CD4-positive, alpha-beta T cell (primary cell): ENCODE measurements at regions of chr11 and their contacts with region 1.

Region 1: DNA sequence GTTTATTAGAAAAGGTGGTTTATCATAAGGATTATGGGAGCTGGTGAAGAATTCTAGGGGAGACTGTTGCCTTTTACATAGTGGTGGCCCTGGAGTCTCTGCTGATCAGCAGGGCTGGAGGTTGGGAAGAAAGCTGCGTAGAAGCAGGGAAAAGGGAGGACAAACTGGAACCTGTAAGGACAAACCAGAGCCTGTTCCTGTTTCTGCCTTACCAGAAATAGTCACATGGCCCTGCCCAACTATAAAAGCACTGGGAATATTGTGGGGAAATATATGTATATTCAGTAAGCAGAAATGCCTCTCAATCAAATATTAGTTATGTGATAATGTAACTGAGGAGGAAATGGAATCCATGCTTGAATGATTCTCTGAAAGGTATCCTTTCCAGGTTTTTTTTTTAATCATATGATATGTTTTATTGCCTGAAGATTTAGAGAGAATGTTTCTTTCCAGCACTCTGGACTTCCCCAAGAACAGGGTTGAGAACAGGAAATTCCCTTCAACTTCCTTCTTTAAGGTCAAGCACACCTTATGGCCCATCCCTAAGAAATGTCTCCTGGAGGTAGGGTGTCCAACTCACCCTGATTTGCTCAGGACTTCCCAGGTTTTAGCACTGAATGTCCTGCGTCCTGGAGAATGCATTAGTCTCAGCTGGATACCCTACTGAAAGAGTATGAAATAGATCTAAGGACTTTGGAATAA is 33.9 kb upstream of the SCUBE2 start:
- DNase-seq: no peak
- ATAC-seq: no peak
- H3K4me3 ChIP-seq: no peak overlapping the region
- H3K4me3 Mint-ChIP-seq: no peak overlapping the region
- H3K27ac ChIP-seq: no peak overlapping the region
- H3K27ac Mint-ChIP-seq: no peak overlapping the region
- H3K4me1 ChIP-seq: no peaks in the 10 kb centered on the region
- H3K4me1 Mint-ChIP-seq: no peaks in the 10 kb centered on the region
- H3K27me3 ChIP-seq: no peaks in the 10 kb centered on the region
- H3K27me3 Mint-ChIP-seq: no peaks in the 10 kb centered on the region
- CTCF ChIP-seq: no peak

Region 2: DNA sequence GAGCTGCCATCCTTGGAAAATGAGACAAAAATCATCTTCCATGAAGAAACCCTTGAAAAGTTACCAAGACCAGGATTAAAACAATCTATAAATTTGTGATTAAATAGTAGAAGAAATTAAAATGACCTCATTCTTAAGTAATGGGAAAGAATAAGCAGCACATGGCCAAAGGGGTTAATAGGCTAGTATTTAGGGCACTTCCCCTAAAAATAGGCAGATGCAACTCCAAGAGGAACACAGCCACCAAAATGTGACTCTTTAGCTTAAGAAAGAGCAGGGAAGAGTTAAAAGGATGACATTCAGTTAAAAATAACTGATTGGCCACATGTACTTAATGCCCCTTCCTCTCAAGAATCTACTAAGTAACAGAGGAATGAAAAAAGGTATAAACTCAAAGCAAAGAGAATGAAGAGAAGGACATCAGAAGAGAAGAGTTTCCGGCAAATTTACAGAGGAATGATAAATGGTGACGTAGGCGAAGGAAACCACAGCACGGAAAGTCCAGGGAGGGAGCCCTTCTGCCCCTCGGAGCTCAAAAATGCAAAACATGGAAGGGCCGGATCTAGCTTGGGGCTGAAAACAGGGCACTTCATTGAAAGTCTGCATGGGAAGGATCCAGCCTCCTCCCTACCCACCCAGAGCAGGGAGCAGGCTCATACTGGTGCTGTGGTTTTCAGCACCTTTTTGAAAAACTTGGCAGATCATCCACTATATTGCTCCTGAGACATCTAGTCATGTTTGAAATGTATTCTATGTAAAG is 51.7 kb before region 1 on chr11:
- CTCF ChIA-PET with region 1: no interaction called
- POLR2A ChIA-PET with region 1: no interaction called
- intact Hi-C with region 1: loop called in 1 of 2 experiments (anchors 2 kb)
- DNase-seq: no peak
- ATAC-seq: no peak
- H3K4me3 ChIP-seq: no peak overlapping the region
- H3K4me3 Mint-ChIP-seq: no peak overlapping the region
- H3K27ac ChIP-seq: no peak overlapping the region
- H3K27ac Mint-ChIP-seq: no peak overlapping the region
- H3K4me1 ChIP-seq: no peaks in the 10 kb centered on the region
- H3K4me1 Mint-ChIP-seq: no peaks in the 10 kb centered on the region
- H3K27me3 ChIP-seq: no peaks in the 10 kb centered on the region
- H3K27me3 Mint-ChIP-seq: peaks cover 18% of the 10 kb centered on the region
- CTCF ChIP-seq: no peak

Region 3: GRCh38 chr11:9314291-9315036 is 189.1 kb after region 1 on chr11 and contains the start of gene TMEM41B:
- CTCF ChIA-PET with region 1: no interaction called
- POLR2A ChIA-PET with region 1: no interaction called
- intact Hi-C with region 1: no loop called
- DNase-seq: peak; percentile 97 to 100 (median 99)
- ATAC-seq: peak; percentile 93
- H3K4me3 ChIP-seq: peak within 1 kb of the TSS; percentile 86
- H3K4me3 Mint-ChIP-seq: peak within 1 kb of the TSS; percentile 97
- H3K27ac ChIP-seq: peak within 1 kb of the TSS; percentile 88 to 92
- H3K27ac Mint-ChIP-seq: peak within 1 kb of the TSS; percentile 96
- H3K4me1 ChIP-seq: peaks cover 22% of the 10 kb centered on the region
- H3K4me1 Mint-ChIP-seq: peaks cover 49% of the 10 kb centered on the region
- H3K27me3 ChIP-seq: no peaks in the 10 kb centered on the region
- H3K27me3 Mint-ChIP-seq: peaks cover 19% of the 10 kb centered on the region
- CTCF ChIP-seq: no peak
- total RNA-seq, gene TMEM41B: 41.4 to 42.7 TPM